ENCODE measurements at regions of chr5 and their contacts with region 1.

Region 1: GRCh38 chr5:150640311-150641005 is at the start of gene SYNPO:
- DNase-seq: peak; percentile 80 to 84
- ATAC-seq: peak; percentile 36 to 42
- H3K4me3 ChIP-seq: peak within 1 kb of the TSS; percentile 54
- H3K27ac ChIP-seq: peak within 1 kb of the TSS; percentile 95 to 96
- H3K4me1 ChIP-seq: peaks cover 88% of the 10 kb centered on the region
- CTCF ChIP-seq: no peak
- EP300 ChIP-seq: peak; percentile 39 to 40; a peak in 2 of 5 replicates
- POLR2A ChIP-seq: no peak; the same call in 1 of the 2 replicates
- RAD21 ChIP-seq: no peak; a peak in 1 of 5 replicates
- polyA plus RNA-seq, gene SYNPO: 13.7 and 20.7 TPM in 2 replicates

Region 2: GRCh38 chr5:150589871-150590601 is 50.4 kb before region 1 on chr5:
- CTCF ChIA-PET with region 1: no interaction called
- POLR2A ChIA-PET with region 1: no interaction called
- DNase-seq: no peak
- ATAC-seq: peak in 1 of 2 experiments; percentile 50; a peak in 3 of 6 replicates
- H3K4me3 ChIP-seq: no peak overlapping the region
- H3K27ac ChIP-seq: no peak overlapping the region
- H3K4me1 ChIP-seq: no peaks in the 10 kb centered on the region
- CTCF ChIP-seq: no peak
- EP300 ChIP-seq: no peak
- POLR2A ChIP-seq: no peak
- RAD21 ChIP-seq: peak in 1 of 2 experiments; percentile 22; a peak in 2 of 5 replicates

Region 3: DNA sequence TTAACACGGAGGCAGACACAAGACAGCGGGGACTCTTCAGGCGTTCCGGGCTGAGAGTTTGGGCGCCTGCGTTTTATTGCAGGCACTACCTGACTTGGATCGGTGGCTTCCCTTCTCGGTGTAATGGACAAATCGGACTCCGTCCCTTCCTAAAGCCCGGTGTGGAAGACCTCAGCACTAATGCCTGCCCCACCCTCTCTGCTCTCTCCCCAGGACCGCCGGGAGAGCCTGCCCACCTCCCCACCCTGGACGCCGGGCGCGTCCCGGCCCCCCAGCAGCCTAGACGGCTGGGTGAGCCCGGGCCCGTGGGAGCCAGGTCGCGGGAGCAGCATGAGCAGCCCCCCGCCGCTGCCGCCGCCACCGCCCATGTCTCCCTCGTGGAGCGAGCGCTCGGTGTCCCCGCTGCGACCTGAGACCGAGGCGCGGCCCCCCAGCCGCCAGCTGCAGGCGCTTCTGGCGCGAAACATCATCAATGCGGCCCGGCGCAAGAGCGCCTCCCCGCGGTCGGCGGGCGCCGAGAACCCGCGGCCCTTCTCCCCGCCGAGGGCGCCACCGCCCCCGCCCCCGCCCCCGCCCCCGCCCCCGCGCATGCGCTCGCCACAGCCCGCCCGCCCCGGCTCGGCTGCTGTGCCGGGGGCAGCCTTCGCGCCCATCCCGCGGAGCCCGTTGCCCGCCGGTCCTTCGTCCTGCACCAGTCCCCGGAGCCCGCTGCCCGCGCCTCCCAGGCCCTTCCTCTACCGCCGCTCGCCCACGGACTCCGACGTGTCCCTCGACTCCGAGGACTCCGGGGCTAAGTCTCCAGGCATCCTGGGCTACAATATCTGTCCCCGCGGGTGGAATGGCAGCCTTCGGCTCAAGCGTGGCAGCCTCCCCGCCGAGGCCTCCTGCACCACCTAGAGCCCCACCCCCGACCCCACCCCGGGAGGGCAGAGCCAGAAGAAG is 16.0 kb after region 1 on chr5:
- CTCF ChIA-PET with region 1: interaction called, 143 read pairs
- POLR2A ChIA-PET with region 1: interaction called, 12 read pairs
- DNase-seq: peak; percentile 60 to 81
- ATAC-seq: peak; percentile 48 to 66
- H3K4me3 ChIP-seq: peak overlapping the region; percentile 50
- H3K27ac ChIP-seq: peak overlapping the region; percentile 83 to 96
- H3K4me1 ChIP-seq: peaks cover 43% of the 10 kb centered on the region
- CTCF ChIP-seq: peak; percentile 90
- EP300 ChIP-seq: no peak
- POLR2A ChIP-seq: peak; percentile 50
- RAD21 ChIP-seq: peak; percentile 71 to 98

Region 4: GRCh38 chr5:150694612-150695011 is 54.2 kb after region 1 on chr5:
- CTCF ChIA-PET with region 1: no interaction called
- POLR2A ChIA-PET with region 1: no interaction called
- DNase-seq: no peak
- ATAC-seq: no peak
- H3K4me3 ChIP-seq: no peak overlapping the region
- H3K27ac ChIP-seq: no peak overlapping the region
- H3K4me1 ChIP-seq: peaks cover 8% of the 10 kb centered on the region
- CTCF ChIP-seq: no peak
- EP300 ChIP-seq: no peak
- POLR2A ChIP-seq: no peak
- RAD21 ChIP-seq: no peak

Measured in A549 (cell line).